ENCODE measurements at regions of chr7 and their contacts with region 1.

Region 1: DNA sequence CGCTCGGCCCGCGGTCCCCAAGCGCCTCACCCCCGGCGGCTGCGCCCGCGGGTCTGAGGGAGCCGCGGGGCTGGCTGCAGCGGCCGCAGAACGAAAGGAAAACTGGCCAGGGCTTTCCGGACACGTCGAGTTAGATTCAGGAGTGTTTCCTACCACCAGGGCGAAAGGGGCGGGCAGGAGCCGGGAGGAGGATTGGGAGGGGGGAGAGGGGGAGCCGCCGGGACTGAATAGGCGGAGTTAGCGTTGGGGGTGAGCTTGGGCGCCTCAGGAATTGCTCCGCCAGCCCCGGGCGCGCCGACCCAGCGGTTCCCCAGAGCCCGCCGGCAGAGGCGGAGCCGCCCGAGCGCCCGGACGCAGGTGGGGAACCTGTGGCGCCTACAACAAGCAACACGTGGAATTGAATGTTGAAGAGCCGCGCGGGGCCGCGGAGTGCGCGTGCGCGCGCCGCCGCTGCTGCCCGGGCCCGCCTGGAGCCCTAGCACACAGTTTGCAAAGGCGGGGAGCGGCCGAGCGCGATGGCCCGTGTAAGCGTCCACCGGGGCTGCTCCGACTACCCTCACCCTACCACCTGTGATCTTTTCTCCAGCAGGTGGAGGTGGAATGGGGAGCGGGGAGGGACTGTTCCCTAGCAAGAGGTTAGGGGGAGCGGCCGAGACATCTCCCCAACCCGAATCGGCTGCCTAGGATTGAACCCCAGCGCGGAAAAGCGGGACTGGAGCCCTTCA is at the start of gene CADPS2:
- DNase-seq: peak; percentile 86
- ATAC-seq: peak; percentile 85
- H3K4me3 ChIP-seq: peak within 1 kb of the TSS; percentile 81 to 98 (median 92)
- H3K27ac ChIP-seq: peak within 1 kb of the TSS; percentile 89
- H3K4me1 ChIP-seq: peaks cover 46% of the 10 kb centered on the region
- H3K27me3 ChIP-seq: no peaks in the 10 kb centered on the region; a peak in 1 of 5 replicates
- CTCF ChIP-seq: no peak; the same call in 1 of the 2 replicates
- EP300 ChIP-seq: no peak
- POLR2A ChIP-seq: peak; percentile 49 to 69
- RAD21 ChIP-seq: peak; percentile 35
- total RNA-seq, gene CADPS2: 43.8 and 62.9 TPM in 2 replicates

Region 2: GRCh38 chr7:122550545-122550944 is 336.0 kb before region 1 on chr7:
- CTCF ChIA-PET with region 1: no interaction called
- POLR2A ChIA-PET with region 1: no interaction called
- in situ Hi-C with region 1: no loop called
- intact Hi-C with region 1: loop called (anchors 5 kb)
- DNase-seq: no peak
- ATAC-seq: no peak
- H3K4me3 ChIP-seq: no peak overlapping the region
- H3K27ac ChIP-seq: no peak overlapping the region
- H3K4me1 ChIP-seq: peaks cover 7% of the 10 kb centered on the region
- H3K27me3 ChIP-seq: no peaks in the 10 kb centered on the region
- CTCF ChIP-seq: peak; percentile 34; the same call in 1 of the 2 replicates
- EP300 ChIP-seq: no peak
- POLR2A ChIP-seq: no peak
- RAD21 ChIP-seq: no peak

Region 3: GRCh38 chr7:122695816-122696215 is 190.7 kb before region 1 on chr7:
- CTCF ChIA-PET with region 1: no interaction called
- POLR2A ChIA-PET with region 1: no interaction called
- in situ Hi-C with region 1: no loop called
- intact Hi-C with region 1: loop called (anchors 2 kb)
- DNase-seq: peak; percentile 91
- ATAC-seq: peak; percentile 99
- H3K4me3 ChIP-seq: no peak overlapping the region
- H3K27ac ChIP-seq: peak overlapping the region; percentile 75
- H3K4me1 ChIP-seq: peaks cover 34% of the 10 kb centered on the region
- H3K27me3 ChIP-seq: no peaks in the 10 kb centered on the region
- CTCF ChIP-seq: peak; percentile 44
- EP300 ChIP-seq: peak in 1 of 2 experiments; percentile 49; a peak in 2 of 4 replicates
- POLR2A ChIP-seq: no peak
- RAD21 ChIP-seq: 0 out of 2 replicates have a peak, but pooled peaks have one; percentile 21

Region 4: DNA sequence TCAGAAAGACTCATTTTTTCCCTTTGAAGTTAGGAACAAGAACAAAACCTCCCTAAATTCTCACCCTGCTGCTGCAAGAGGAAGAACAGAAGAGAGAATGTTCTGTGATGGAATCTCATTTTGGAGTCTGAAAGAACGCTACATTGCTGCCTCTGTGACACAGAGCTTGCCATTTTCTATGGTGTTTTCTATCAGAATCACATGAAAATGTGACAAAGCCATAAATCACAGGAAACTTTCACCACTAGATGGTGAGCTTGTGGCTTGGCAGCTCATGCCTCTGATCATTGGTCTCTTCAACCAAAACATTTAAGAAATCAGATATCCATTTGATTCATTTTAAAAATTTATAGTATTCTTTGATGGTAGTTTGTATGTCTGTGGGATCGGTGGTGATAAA is 83.2 kb before region 1 on chr7:
- CTCF ChIA-PET with region 1: no interaction called
- POLR2A ChIA-PET with region 1: interaction called, 3 read pairs
- in situ Hi-C with region 1: loop called (anchors 10 kb)
- intact Hi-C with region 1: loop called (anchors 2 kb)
- DNase-seq: peak; percentile 36
- ATAC-seq: peak; percentile 69; the same call in 2 of the 3 replicates
- H3K4me3 ChIP-seq: no peak overlapping the region
- H3K27ac ChIP-seq: no peak overlapping the region
- H3K4me1 ChIP-seq: peaks cover 13% of the 10 kb centered on the region
- H3K27me3 ChIP-seq: no peaks in the 10 kb centered on the region
- CTCF ChIP-seq: peak; percentile 71
- EP300 ChIP-seq: no peak
- POLR2A ChIP-seq: no peak
- RAD21 ChIP-seq: peak; percentile 51; the same call in 1 of the 2 replicates

Region 5: GRCh38 chr7:123004931-123005330 is 118.4 kb after region 1 on chr7:
- CTCF ChIA-PET with region 1: no interaction called
- POLR2A ChIA-PET with region 1: no interaction called
- in situ Hi-C with region 1: no loop called
- intact Hi-C with region 1: no loop called
- DNase-seq: no peak
- ATAC-seq: no peak
- H3K4me3 ChIP-seq: no peak overlapping the region
- H3K27ac ChIP-seq: no peak overlapping the region
- H3K4me1 ChIP-seq: no peaks in the 10 kb centered on the region
- H3K27me3 ChIP-seq: no peaks in the 10 kb centered on the region
- CTCF ChIP-seq: no peak
- EP300 ChIP-seq: no peak
- POLR2A ChIP-seq: no peak
- RAD21 ChIP-seq: no peak

Region 6: DNA sequence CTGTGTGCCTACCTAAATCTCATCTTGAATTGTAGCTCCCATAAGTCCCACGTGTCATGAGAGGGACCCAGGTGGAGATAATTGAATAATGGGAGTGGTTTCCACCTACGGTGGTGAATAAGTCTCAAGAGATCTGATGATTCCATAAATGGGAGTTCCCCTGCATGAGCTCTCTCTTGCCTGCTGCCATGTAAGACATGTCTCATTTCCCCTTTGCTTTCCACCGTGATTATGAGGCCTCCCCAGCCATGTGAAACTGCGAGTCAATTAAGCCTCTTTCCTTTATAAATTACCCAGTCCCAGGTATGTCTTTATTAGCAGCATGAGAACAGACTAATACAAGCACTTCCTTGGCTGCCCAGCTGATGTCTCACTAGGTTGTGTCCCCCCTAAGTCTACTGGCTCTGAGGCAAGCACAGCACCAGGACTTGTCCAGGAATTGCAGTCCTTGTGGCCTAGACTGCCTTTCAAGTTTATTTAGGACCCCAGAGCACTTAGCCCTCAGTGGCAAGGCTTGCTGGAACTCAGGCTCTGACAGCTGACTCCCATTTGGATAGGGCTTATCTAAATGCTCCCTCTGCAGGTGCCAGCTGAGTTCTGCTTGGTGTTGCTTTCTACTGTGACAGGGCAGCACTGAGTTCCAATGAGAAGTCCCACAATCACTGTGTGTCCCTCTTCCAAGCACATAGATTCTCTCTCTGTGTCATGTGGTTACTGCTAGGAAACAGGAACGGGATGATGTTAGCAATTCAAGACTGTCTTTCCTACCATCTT is 168.0 kb after region 1 on chr7:
- CTCF ChIA-PET with region 1: no interaction called
- POLR2A ChIA-PET with region 1: no interaction called
- in situ Hi-C with region 1: no loop called
- intact Hi-C with region 1: loop called (anchors 5 kb)
- DNase-seq: peak; percentile 29
- ATAC-seq: peak; percentile 84
- H3K4me3 ChIP-seq: no peak overlapping the region
- H3K27ac ChIP-seq: no peak overlapping the region
- H3K4me1 ChIP-seq: no peaks in the 10 kb centered on the region
- H3K27me3 ChIP-seq: no peaks in the 10 kb centered on the region
- CTCF ChIP-seq: peak; percentile 59
- EP300 ChIP-seq: no peak
- POLR2A ChIP-seq: no peak
- RAD21 ChIP-seq: no peak

Measured in HepG2 (cell line).